Caco-2 (cell line): ENCODE measurements at regions of chr11 and their contacts with region 1.

Region 1: DNA sequence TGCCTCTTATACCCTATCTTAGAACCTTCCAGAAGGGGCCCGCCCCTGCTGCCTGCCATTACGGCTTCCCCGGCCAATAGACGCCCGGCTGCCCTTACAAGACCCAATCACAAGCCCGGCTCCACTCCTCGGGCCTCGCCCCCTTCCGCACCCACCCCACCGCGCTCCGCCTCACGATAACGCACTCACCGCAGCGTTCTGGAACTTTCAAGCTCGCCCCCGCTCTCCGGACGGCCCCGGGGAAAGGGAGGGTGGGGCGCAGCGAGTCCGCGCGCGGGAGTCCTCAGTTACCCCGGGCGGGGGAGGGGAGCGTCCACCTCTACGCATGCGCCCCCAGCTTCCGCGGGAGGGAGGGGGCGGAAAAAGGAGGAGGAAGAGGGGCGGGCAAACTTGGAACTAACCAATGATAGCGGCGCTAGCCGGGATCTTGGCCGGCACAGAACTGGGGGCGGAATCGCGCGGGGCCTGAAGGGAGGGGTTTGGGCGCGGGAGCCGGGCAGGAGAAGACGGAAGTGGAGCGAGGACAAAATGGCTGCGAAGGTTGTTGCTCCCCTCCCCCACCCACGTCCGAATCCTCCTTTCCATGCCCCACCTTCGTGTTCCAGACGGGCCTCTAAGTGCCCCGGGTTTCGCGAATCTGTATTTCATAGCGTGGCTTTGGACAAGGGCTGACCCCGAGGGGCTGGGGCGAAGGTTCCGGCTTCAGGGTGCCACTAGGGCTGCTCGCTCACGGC is 389 bp upstream of the HSPA8 start:
- DNase-seq: peak; percentile 100
- H3K4me3 ChIP-seq: peak overlapping the region; percentile 85
- H3K4me3 Mint-ChIP-seq: peak overlapping the region; percentile 84
- H3K27ac Mint-ChIP-seq: peak overlapping the region; percentile 98
- H3K4me1 ChIP-seq: peaks cover 26% of the 10 kb centered on the region
- H3K4me1 Mint-ChIP-seq: peaks cover 31% of the 10 kb centered on the region
- H3K27me3 ChIP-seq: no peaks in the 10 kb centered on the region
- H3K27me3 Mint-ChIP-seq: no peaks in the 10 kb centered on the region
- CTCF ChIP-seq: no peak

Region 2: GRCh38 chr11:123047266-123047946 is 14.9 kb before region 1 on chr11:
- CTCF ChIA-PET with region 1: interaction called, 8 read pairs
- POLR2A ChIA-PET with region 1: interaction called, 55 read pairs
- intact Hi-C with region 1: no loop called
- DNase-seq: no peak
- H3K4me3 ChIP-seq: no peak overlapping the region
- H3K4me3 Mint-ChIP-seq: no peak overlapping the region
- H3K27ac Mint-ChIP-seq: no peak overlapping the region
- H3K4me1 ChIP-seq: no peaks in the 10 kb centered on the region
- H3K4me1 Mint-ChIP-seq: no peaks in the 10 kb centered on the region
- H3K27me3 ChIP-seq: no peaks in the 10 kb centered on the region
- H3K27me3 Mint-ChIP-seq: no peaks in the 10 kb centered on the region
- CTCF ChIP-seq: no peak